Dorsolateral prefrontal cortex (tissue), 120 donors: ENCODE measurements at regions of chr5 and their contacts with region 1.

Region 1: DNA sequence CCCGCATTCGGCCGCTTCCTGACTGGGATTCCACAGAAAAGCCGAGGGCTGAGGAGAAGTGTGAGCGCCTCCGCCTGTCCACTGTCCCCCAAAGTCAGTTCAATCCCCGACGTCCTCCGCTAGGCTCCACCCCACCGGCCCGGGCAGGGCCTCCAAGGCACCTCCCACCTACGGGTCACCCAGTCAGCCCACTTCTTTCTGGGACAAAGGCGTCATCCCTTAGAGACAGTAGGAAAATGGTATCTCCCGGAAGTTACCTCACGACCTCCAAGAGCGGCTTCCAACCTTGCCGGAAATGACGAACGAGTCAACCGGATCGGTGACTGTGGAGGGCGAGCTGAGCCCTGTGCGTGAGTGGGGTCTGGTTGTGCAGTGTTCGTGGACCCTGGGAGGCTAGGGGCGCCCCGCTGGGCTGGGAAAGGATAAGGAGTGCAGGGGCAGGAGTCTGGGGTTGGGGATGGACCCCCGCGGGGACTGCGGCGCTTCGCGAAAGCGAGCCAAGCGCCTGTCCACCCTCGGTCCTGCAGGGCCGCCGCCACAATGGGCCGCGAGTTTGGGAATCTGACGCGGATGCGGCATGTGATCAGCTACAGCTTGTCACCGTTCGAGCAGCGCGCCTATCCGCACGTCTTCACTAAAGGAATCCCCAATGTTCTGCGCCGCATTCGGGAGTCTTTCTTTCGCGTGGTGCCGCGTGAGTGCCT is at the starts of genes GDF9 and UQCRQ:
- DNase-seq: peak; percentile 90 to 98 (median 98)
- H3K4me3 ChIP-seq: peak within 1 kb of the TSS; percentile 69 to 100 (median 93)
- H3K27ac ChIP-seq: peak within 1 kb of the TSS; percentile 82 to 99 (median 97)
- H3K27me3 ChIP-seq: no peaks in the 10 kb centered on the region
- CTCF ChIP-seq: peak in 54 of 56 donors; percentile 33 to 80 (median 55)
- total RNA-seq, gene GDF9: 0.34 to 3.8 (median 1.4) TPM
- total RNA-seq, gene UQCRQ: 166 to 403 (median 290) TPM

Region 2: GRCh38 chr5:132386644-132387286 is 479.7 kb before region 1 on chr5:
- intact Hi-C with region 1: loop called in 1 of 2 experiments (anchors 10 kb)
- DNase-seq: peak; percentile 57 to 84 (median 74)
- H3K4me3 ChIP-seq: no peak overlapping the region
- H3K27ac ChIP-seq: peak overlapping the region in 41 of 59 donors; percentile 2 to 87 (median 61)
- H3K27me3 ChIP-seq: no peaks in the 10 kb centered on the region
- CTCF ChIP-seq: peak; percentile 36 to 92 (median 86)

Region 3: GRCh38 chr5:132736853-132737833 is 129.4 kb before region 1 on chr5 and contains the start of gene KIF3A:
- intact Hi-C with region 1: loop called in 1 of 2 experiments (anchors 5 kb)
- DNase-seq: peak; percentile 94 to 98 (median 96)
- H3K4me3 ChIP-seq: peak within 1 kb of the TSS; percentile 57 to 99 (median 91)
- H3K27ac ChIP-seq: peak within 1 kb of the TSS in 58 of 59 donors; percentile 6 to 93 (median 84)
- H3K27me3 ChIP-seq: no peaks in the 10 kb centered on the region
- CTCF ChIP-seq: peak in 47 of 56 donors; percentile 6 to 63 (median 39)
- total RNA-seq, gene KIF3A: 58.5 to 177 (median 126) TPM

Region 4: GRCh38 chr5:132759114-132760048 is 107.1 kb before region 1 on chr5:
- intact Hi-C with region 1: loop called (anchors 5 to 10 kb)
- DNase-seq: no peak
- H3K4me3 ChIP-seq: no peak overlapping the region
- H3K27ac ChIP-seq: peak overlapping the region in 32 of 59 donors; percentile 1 to 73 (median 28)
- H3K27me3 ChIP-seq: no peaks in the 10 kb centered on the region
- CTCF ChIP-seq: no peak

Region 5: DNA sequence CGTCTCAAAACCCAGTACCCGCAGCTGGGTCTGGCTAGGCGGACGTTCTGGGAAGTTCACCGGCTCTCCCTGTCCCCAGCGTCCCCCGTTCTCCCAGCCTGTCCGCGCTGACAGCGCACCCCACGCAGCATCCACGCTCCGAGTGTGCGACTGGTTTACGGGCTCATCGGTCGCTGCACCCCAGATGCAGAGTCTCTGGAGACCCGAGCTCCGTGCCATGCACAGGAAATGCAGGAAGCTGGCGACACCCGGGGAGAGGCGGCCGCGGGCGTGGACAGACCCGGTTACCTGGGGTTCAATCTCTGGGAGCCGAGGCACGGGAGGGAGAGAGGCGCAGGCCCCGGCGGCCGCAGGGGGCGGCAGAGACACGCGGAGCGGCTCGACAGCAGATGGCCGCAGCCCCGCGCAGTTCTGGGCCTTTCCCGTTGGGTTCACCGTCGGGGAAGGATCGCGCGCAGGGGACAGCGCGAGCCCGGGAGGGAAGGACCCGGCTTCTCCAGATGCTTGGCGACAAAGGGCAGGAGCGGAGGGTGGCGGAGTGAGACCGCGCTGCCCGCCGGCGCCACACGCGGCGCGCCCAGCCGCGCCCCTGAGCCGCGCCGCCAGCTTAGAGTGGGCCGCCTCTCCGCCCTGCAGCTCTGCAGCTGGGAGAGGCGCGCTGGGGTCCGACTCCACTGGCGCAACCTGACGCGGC is 36.6 kb before region 1 on chr5:
- intact Hi-C with region 1: loop called (anchors 1 to 2 kb)
- DNase-seq: peak; percentile 68 to 86 (median 76)
- H3K4me3 ChIP-seq: peak overlapping the region; percentile 38 to 93 (median 81)
- H3K27ac ChIP-seq: peak overlapping the region; percentile 46 to 100 (median 95)
- H3K27me3 ChIP-seq: no peaks in the 10 kb centered on the region
- CTCF ChIP-seq: peak; percentile 50 to 95 (median 81)

Region 6: GRCh38 chr5:133025804-133026663 is 159.5 kb after region 1 on chr5 and contains the start of gene ZCCHC10:
- intact Hi-C with region 1: loop called in 1 of 2 experiments (anchors 10 kb)
- DNase-seq: peak; percentile 79 to 96 (median 92)
- H3K4me3 ChIP-seq: peak within 1 kb of the TSS; percentile 61 to 99 (median 91)
- H3K27ac ChIP-seq: peak within 1 kb of the TSS; percentile 39 to 98 (median 94)
- H3K27me3 ChIP-seq: no peaks in the 10 kb centered on the region
- CTCF ChIP-seq: peak in 2 of 56 donors; percentile 16 to 18
- total RNA-seq, gene ZCCHC10: 7.5 to 24.1 (median 14.4) TPM